ENCODE measurements at regions of chr1 and their contacts with region 1.

Region 1: GRCh38 chr1:179809506-179810366 is 66.6 kb downstream of the FAM163A start:
- DNase-seq: peak; percentile 84
- H3K4me3 ChIP-seq: no peak overlapping the region
- H3K27ac ChIP-seq: no peak overlapping the region
- H3K4me1 ChIP-seq: peaks cover 5 to 16% (median 13%) of the 10 kb centered on the region in 6 donors
- H3K27me3 ChIP-seq: peaks cover 0 to 13% (median 0%) of the 10 kb centered on the region in 7 donors
- CTCF ChIP-seq: peak; percentile 67 to 95 (median 88)
- POLR2A ChIP-seq: no peak

Region 2: GRCh38 chr1:179599623-179600249 is 210.0 kb before region 1 on chr1:
- intact Hi-C with region 1: no loop called
- DNase-seq: no peak
- H3K4me3 ChIP-seq: no peak overlapping the region
- H3K27ac ChIP-seq: no peak overlapping the region
- H3K4me1 ChIP-seq: no peaks in the 10 kb centered on the region
- H3K27me3 ChIP-seq: peaks cover 0 to 19% (median 0%) of the 10 kb centered on the region in 7 donors
- CTCF ChIP-seq: peak in 4 of 11 experiments; percentile 17 to 32 (median 22)
- POLR2A ChIP-seq: no peak

Region 3: GRCh38 chr1:179706339-179706941 is 103.3 kb before region 1 on chr1:
- intact Hi-C with region 1: loop called (anchors 5 kb)
- DNase-seq: no peak
- H3K4me3 ChIP-seq: no peak overlapping the region
- H3K27ac ChIP-seq: no peak overlapping the region
- H3K4me1 ChIP-seq: peaks cover 8 to 26% (median 18%) of the 10 kb centered on the region in 6 donors
- H3K27me3 ChIP-seq: no peaks in the 10 kb centered on the region
- CTCF ChIP-seq: peak; percentile 29 to 75 (median 57)
- POLR2A ChIP-seq: no peak

Region 4: GRCh38 chr1:180003026-180003695 is 193.4 kb after region 1 on chr1:
- intact Hi-C with region 1: no loop called
- DNase-seq: no peak
- H3K4me3 ChIP-seq: no peak overlapping the region
- H3K27ac ChIP-seq: peak overlapping the region in 1 of 8 donors; percentile 7
- H3K4me1 ChIP-seq: peaks cover 0 to 37% (median 14%) of the 10 kb centered on the region in 6 donors
- H3K27me3 ChIP-seq: no peaks in the 10 kb centered on the region
- CTCF ChIP-seq: no peak
- POLR2A ChIP-seq: no peak

Measured in spleen (tissue), 13 donors.